ENCODE measurements at regions of chr16 and their contacts with region 1.

Region 1: GRCh38 chr16:66007717-66008116 is 358.8 kb upstream of the CDH5 start:
- DNase-seq: peak; percentile 93
- ATAC-seq: peak; percentile 84
- H3K4me3 ChIP-seq: no peak overlapping the region
- H3K27ac ChIP-seq: peak overlapping the region; percentile 70; the same call in 1 of the 2 replicates
- H3K4me1 ChIP-seq: peaks cover 19% of the 10 kb centered on the region
- H3K27me3 ChIP-seq: no peaks in the 10 kb centered on the region; the same call in 1 of the 2 replicates
- CTCF ChIP-seq: no peak
- POLR2A ChIP-seq: no peak
- RAD21 ChIP-seq: no peak

Region 2: GRCh38 chr16:65745201-65745708 is 262.5 kb before region 1 on chr16:
- CTCF ChIA-PET with region 1: no interaction called
- POLR2A ChIA-PET with region 1: no interaction called
- dilution Hi-C with region 1: no loop called
- in situ Hi-C with region 1: no loop called
- intact Hi-C with region 1: no loop called
- DNase-seq: no peak
- ATAC-seq: no peak
- H3K4me3 ChIP-seq: no peak overlapping the region
- H3K27ac ChIP-seq: no peak overlapping the region
- H3K4me1 ChIP-seq: no peaks in the 10 kb centered on the region
- H3K27me3 ChIP-seq: peaks cover 8% of the 10 kb centered on the region
- CTCF ChIP-seq: no peak
- POLR2A ChIP-seq: no peak
- RAD21 ChIP-seq: no peak

Region 3: GRCh38 chr16:66070140-66070917 is 62.6 kb after region 1 on chr16:
- CTCF ChIA-PET with region 1: no interaction called
- POLR2A ChIA-PET with region 1: no interaction called
- dilution Hi-C with region 1: no loop called
- in situ Hi-C with region 1: no loop called
- intact Hi-C with region 1: loop called (anchors 2 kb)
- DNase-seq: peak; percentile 83
- ATAC-seq: peak; percentile 93
- H3K4me3 ChIP-seq: no peak overlapping the region
- H3K27ac ChIP-seq: peak overlapping the region; percentile 58; the same call in 1 of the 2 replicates
- H3K4me1 ChIP-seq: peaks cover 7% of the 10 kb centered on the region
- H3K27me3 ChIP-seq: no peaks in the 10 kb centered on the region; the same call in 1 of the 2 replicates
- CTCF ChIP-seq: no peak
- POLR2A ChIP-seq: no peak
- RAD21 ChIP-seq: no peak

Region 4: DNA sequence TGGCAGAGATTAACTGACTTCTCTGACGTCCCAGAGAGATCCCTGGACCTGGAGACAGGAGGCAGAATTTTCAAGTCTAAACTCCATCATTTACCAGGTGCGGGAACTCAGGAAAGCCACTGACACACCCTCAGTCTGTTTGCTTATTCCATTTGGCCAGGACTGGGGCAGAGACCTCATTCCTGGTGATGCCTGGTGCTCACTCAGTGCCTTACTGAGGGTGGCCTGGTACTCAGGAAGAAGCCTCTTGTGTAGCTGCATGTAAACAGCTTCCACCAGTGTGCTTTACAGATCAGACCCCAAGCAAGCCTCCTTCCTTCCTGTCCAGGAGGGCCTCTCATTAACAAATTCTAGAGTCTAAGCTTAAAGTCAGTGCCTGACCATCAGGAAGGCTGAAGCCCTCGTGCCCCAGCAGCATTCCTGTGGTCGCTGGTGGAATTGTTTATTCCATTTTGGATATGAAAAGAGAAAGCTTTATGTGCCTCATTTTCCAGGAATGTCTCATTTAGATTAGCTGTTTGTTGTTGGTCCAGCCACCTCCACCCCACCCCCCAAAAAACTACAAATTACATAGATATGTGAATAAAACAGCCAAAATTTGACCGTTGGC is 122.7 kb after region 1 on chr16:
- CTCF ChIA-PET with region 1: no interaction called
- POLR2A ChIA-PET with region 1: no interaction called
- dilution Hi-C with region 1: no loop called
- in situ Hi-C with region 1: no loop called
- intact Hi-C with region 1: loop called (anchors 5 kb)
- DNase-seq: peak; percentile 92
- ATAC-seq: peak; percentile 87
- H3K4me3 ChIP-seq: no peak overlapping the region
- H3K27ac ChIP-seq: peak overlapping the region; percentile 99
- H3K4me1 ChIP-seq: peaks cover 57% of the 10 kb centered on the region
- H3K27me3 ChIP-seq: no peaks in the 10 kb centered on the region
- CTCF ChIP-seq: no peak
- POLR2A ChIP-seq: no peak
- RAD21 ChIP-seq: no peak; the same call in 1 of the 2 replicates